Activated CD4-positive, alpha-beta T cell treated with anti-CD3 and anti-CD28 coated beads, Interleukin-2, amount 10 ng/mL, durations not matched to agents 7 days and 5 days (primary cell): ENCODE measurements at regions of chr1 and their contacts with region 1.

Region 1: DNA sequence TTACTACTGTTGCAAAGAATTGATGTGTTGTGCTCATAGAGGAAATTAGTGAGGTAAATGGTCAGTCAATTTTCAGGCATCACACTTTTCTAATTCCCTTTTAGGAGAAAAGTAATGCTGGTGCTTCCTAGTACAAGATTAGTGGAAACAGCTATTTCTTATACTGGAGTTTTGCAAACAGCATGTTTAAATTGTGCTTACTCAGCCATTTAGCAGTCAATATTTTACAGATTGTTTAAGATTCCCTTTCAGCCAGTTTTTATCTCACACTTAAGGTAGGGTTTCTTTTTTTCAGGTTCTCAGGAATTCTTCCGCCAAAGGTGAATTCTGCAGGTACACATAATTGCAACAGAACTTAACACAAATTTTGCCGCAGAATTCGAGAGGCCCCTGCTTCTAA is 10.9 kb downstream of the SRRM1 start:
- DNase-seq: no peak
- H3K4me3 Mint-ChIP-seq: no peak overlapping the region
- H3K27ac Mint-ChIP-seq: no peak overlapping the region
- H3K4me1 Mint-ChIP-seq: peaks cover 17% of the 10 kb centered on the region
- H3K27me3 Mint-ChIP-seq: no peaks in the 10 kb centered on the region

Region 2: DNA sequence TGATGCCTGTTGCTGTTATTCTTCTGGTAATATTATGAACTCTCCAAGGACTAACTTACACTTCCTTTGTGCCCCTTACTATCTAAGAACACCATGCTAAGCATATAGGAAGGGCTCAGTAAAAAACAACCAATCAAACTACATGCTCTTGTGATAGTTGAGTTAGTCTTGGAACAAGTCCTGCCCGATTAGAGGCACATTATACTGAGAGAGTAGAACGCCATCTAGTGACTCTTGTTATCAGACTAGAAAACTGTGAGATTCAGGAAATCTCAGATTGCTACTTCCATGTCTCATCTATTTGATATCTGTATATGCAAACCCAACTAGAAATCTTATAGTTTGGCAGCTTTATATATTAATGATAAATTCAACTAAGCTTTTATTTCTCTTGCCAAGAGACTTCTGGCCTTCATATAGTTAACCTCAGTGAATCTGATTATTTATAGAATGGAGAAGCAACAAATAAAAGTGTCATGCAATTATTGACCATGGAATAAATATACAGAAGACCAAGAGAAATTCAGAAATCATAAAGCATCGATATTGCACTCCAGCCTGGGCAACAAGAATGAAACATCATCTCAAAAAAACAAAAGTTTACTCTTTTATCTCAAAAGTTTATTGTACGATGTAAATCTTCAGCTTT is 18.7 kb before region 1 on chr1:
- CTCF ChIA-PET with region 1: no interaction called
- POLR2A ChIA-PET with region 1: no interaction called
- DNase-seq: peak; percentile 35
- H3K4me3 Mint-ChIP-seq: no peak overlapping the region
- H3K27ac Mint-ChIP-seq: no peak overlapping the region
- H3K4me1 Mint-ChIP-seq: peaks cover 7% of the 10 kb centered on the region
- H3K27me3 Mint-ChIP-seq: peaks cover 17% of the 10 kb centered on the region

Region 3: GRCh38 chr1:24664507-24665033 is 10.6 kb after region 1 on chr1:
- CTCF ChIA-PET with region 1: interaction called, 10 read pairs
- POLR2A ChIA-PET with region 1: no interaction called
- DNase-seq: no peak
- H3K4me3 Mint-ChIP-seq: no peak overlapping the region
- H3K27ac Mint-ChIP-seq: no peak overlapping the region
- H3K4me1 Mint-ChIP-seq: peaks cover 4% of the 10 kb centered on the region
- H3K27me3 Mint-ChIP-seq: no peaks in the 10 kb centered on the region